Endothelial cell of umbilical vein (primary cell): ENCODE measurements at regions of chr20 and their contacts with region 1.

Region 1: GRCh38 chr20:56554869-56555268 is 21.8 kb downstream of the FAM209B start:
- DNase-seq: peak; percentile 85
- H3K4me3 ChIP-seq: no peak overlapping the region
- H3K27ac ChIP-seq: peak overlapping the region; percentile 49
- H3K4me1 ChIP-seq: peaks cover 5% of the 10 kb centered on the region
- H3K27me3 ChIP-seq: no peaks in the 10 kb centered on the region
- CTCF ChIP-seq: peak in 1 of 2 donors; percentile 3
- POLR2A ChIP-seq: no peak

Region 2: GRCh38 chr20:56540420-56540819 is 14.4 kb before region 1 on chr20:
- CTCF ChIA-PET with region 1: interaction called, 14 read pairs
- POLR2A ChIA-PET with region 1: no interaction called
- dilution Hi-C with region 1: no loop called
- intact Hi-C with region 1: no loop called
- DNase-seq: no peak
- H3K4me3 ChIP-seq: no peak overlapping the region
- H3K27ac ChIP-seq: no peak overlapping the region
- H3K4me1 ChIP-seq: no peaks in the 10 kb centered on the region
- H3K27me3 ChIP-seq: no peaks in the 10 kb centered on the region
- CTCF ChIP-seq: no peak
- POLR2A ChIP-seq: no peak

Region 3: GRCh38 chr20:56629670-56630478 is 75.0 kb after region 1 on chr20:
- CTCF ChIA-PET with region 1: no interaction called
- POLR2A ChIA-PET with region 1: no interaction called
- dilution Hi-C with region 1: no loop called
- intact Hi-C with region 1: loop called (anchors 5 kb)
- DNase-seq: no peak
- H3K4me3 ChIP-seq: no peak overlapping the region
- H3K27ac ChIP-seq: no peak overlapping the region
- H3K4me1 ChIP-seq: no peaks in the 10 kb centered on the region
- H3K27me3 ChIP-seq: peaks cover 65 to 75% of the 10 kb centered on the region in 2 experiments
- CTCF ChIP-seq: peak; percentile 19 to 50
- POLR2A ChIP-seq: no peak

Region 4: DNA sequence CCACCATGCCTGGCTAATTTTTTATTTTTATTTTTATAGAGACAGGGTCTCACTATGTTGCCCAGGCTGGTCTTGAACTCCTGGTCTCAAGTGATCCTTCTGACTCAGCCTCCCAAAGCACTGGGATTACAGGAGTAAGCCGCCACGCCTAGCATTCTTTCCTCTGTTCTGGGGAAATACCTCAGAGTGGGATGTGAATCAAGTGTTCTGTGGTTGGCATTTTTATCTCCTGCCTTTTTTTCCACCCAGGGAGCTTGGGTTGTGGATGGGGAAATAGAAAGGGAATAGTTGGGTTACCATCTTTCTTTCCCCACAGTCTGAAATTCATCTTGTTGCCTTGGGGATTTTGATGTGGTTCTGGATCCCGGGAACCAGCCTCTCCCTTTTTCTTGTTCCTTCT is 98.4 kb after region 1 on chr20:
- CTCF ChIA-PET with region 1: no interaction called
- POLR2A ChIA-PET with region 1: no interaction called
- dilution Hi-C with region 1: no loop called
- intact Hi-C with region 1: no loop called
- DNase-seq: no peak
- H3K4me3 ChIP-seq: no peak overlapping the region
- H3K27ac ChIP-seq: no peak overlapping the region
- H3K4me1 ChIP-seq: no peaks in the 10 kb centered on the region
- H3K27me3 ChIP-seq: no peaks in the 10 kb centered on the region
- CTCF ChIP-seq: no peak
- POLR2A ChIP-seq: no peak

Region 5: DNA sequence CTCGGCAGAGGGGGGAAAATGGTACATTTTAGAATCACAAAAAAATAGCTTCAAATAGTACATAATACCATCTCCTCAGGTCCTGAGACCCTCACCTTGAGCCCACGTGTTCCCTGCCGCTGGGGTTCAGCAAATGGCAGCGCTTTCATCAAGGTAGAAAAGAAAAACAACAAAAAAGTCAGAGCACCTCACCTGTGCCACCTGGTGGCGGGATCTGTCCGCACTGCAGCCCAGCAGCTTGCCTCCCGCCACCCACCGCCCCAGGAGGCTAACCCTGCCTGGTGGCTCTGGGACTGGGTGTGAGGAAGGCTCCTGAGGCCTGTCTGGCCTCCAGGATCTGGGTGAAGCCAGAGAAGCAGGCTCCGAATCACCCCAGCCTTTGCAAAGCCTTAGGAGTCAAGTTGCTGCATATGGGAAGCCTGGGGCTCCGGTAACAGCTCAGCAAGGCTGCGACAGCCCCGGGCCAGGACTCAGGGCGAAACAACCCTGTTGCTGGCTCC is 440.8 kb after region 1 on chr20:
- CTCF ChIA-PET with region 1: interaction called, 9 read pairs
- POLR2A ChIA-PET with region 1: no interaction called
- dilution Hi-C with region 1: no loop called
- intact Hi-C with region 1: loop called (anchors 1 kb)
- DNase-seq: no peak
- H3K4me3 ChIP-seq: no peak overlapping the region
- H3K27ac ChIP-seq: no peak overlapping the region
- H3K4me1 ChIP-seq: no peaks in the 10 kb centered on the region
- H3K27me3 ChIP-seq: no peaks in the 10 kb centered on the region
- CTCF ChIP-seq: peak in 1 of 2 donors; percentile 24
- POLR2A ChIP-seq: no peak

Region 6: DNA sequence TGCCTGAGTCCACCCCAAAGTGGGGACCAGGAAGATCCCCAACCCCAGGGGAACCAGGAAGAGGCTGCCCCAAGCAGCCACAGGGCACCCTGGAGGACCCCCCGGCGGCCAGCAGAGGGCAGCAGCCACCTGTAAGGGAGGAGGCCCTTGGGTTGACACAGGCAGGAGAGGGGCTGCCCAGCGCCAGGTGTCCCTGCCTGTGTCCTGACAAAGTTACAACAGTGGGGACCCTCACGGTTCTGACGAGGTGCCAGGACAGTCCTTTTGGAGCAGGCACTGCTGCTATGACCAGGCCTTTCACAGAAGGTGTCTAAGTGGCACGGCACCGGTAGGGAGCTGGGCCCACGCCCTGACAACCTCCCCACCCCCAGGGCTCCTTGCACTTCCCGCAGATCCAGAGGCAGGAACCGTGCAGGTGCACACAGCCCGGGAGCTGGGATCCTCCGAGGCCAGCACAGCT is 534.9 kb after region 1 on chr20:
- CTCF ChIA-PET with region 1: interaction called, 4 read pairs
- POLR2A ChIA-PET with region 1: no interaction called
- dilution Hi-C with region 1: no loop called
- intact Hi-C with region 1: loop called (anchors 2 kb)
- DNase-seq: peak; percentile 7
- H3K4me3 ChIP-seq: no peak overlapping the region
- H3K27ac ChIP-seq: no peak overlapping the region
- H3K4me1 ChIP-seq: no peaks in the 10 kb centered on the region
- H3K27me3 ChIP-seq: no peaks in the 10 kb centered on the region
- CTCF ChIP-seq: peak; percentile 67 to 88
- POLR2A ChIP-seq: no peak

Region 7: DNA sequence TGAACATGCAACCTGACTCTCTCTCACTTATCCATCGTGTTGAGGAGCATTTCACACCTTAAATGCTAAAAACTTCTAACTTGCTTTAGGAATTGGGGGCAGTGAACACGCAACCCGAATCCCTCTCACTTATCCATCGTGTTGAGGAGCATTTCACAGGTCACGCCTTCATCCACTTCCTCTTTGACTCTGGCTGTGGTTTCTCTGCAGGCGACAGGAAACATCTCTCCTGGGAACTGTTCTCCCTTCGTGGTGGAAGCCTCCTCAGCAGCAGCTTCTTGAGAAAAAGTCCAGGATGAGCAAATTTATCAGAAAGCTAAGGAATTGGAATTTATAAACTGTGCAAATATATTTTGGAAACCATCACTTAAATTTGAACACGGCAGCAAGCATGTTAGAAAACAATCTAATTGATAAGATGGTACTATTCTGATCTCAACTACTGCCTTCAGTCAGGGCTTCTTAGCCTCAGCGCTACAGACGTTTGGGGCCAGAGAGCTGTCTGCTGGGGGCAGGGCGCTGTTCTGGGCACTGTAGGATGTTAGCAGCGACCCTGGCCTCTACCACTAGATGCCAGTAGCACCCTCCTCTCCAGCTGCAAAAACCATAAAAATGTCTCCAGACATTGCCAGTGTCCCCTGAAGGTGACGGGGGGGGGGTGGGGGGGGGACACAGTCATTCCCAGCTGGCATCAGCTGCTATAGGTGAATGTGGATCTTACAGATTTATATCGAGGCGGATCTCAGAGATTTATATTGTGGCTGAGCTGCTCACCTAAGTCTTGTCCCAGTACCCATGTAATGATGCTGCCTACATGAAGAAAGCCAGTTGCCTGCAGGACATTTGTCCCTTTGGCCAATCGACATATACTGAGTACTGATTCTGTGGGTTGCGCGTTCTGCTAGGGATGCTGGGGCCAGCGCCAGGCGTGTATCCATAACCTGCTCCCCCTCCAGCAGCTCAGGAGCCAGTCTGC is 943.8 kb after region 1 on chr20:
- CTCF ChIA-PET with region 1: no interaction called
- POLR2A ChIA-PET with region 1: no interaction called
- dilution Hi-C with region 1: no loop called
- intact Hi-C with region 1: loop called (anchors 10 kb)
- DNase-seq: no peak
- H3K4me3 ChIP-seq: no peak overlapping the region
- H3K27ac ChIP-seq: no peak overlapping the region
- H3K4me1 ChIP-seq: peaks cover 2% of the 10 kb centered on the region
- H3K27me3 ChIP-seq: peaks cover 13 to 18% of the 10 kb centered on the region in 2 experiments
- CTCF ChIP-seq: peak; percentile 6 to 50
- POLR2A ChIP-seq: no peak

Region 8: GRCh38 chr20:57544860-57545479 is 990.1 kb after region 1 on chr20:
- CTCF ChIA-PET with region 1: no interaction called
- POLR2A ChIA-PET with region 1: no interaction called
- dilution Hi-C with region 1: no loop called
- intact Hi-C with region 1: no loop called
- DNase-seq: peak; percentile 6
- H3K4me3 ChIP-seq: no peak overlapping the region
- H3K27ac ChIP-seq: no peak overlapping the region
- H3K4me1 ChIP-seq: no peaks in the 10 kb centered on the region
- H3K27me3 ChIP-seq: peaks cover 2 to 8% of the 10 kb centered on the region in 2 experiments
- CTCF ChIP-seq: no peak
- POLR2A ChIP-seq: no peak